H1 (cell line): ENCODE measurements at regions of chr21 and their contacts with region 1.

Region 1: GRCh38 chr21:14251336-14251735 is 35.4 kb downstream of the RBM11 start:
- DNase-seq: no peak
- H3K4me3 ChIP-seq: no peak overlapping the region
- H3K27ac ChIP-seq: no peak overlapping the region
- H3K4me1 ChIP-seq: no peaks in the 10 kb centered on the region
- H3K27me3 ChIP-seq: no peaks in the 10 kb centered on the region
- CTCF ChIP-seq: no peak
- EP300 ChIP-seq: no peak
- POLR2A ChIP-seq: no peak
- RAD21 ChIP-seq: no peak

Region 2: DNA sequence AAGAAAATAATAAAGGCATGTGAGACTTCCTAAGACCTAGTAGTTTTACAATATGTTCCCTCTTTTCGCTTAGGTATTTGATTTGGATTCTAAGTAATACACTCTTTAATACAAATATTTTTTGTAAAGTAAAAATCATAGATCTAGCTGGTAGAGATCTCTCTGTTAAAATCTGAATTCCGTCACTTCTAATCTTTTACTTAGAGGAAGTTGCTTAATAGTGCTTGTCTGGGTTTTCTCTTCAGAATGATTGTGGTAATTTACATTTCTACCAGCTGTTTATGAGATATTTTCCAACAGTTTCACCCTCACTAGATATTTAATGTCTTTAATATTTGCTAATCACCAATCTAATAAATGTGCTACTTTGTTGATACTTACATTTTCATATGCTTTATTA is 12.1 kb before region 1 on chr21:
- CTCF ChIA-PET with region 1: interaction called, 10 read pairs
- POLR2A ChIA-PET with region 1: no interaction called
- DNase-seq: no peak
- H3K4me3 ChIP-seq: no peak overlapping the region
- H3K27ac ChIP-seq: no peak overlapping the region
- H3K4me1 ChIP-seq: peaks cover 0 to 3% (median 0%) of the 10 kb centered on the region in 4 experiments; a peak in 1 of 7 replicates
- H3K27me3 ChIP-seq: no peaks in the 10 kb centered on the region
- CTCF ChIP-seq: no peak
- EP300 ChIP-seq: no peak
- POLR2A ChIP-seq: no peak
- RAD21 ChIP-seq: no peak